HCT116 (cell line): ENCODE measurements at regions of chr14 and their contacts with region 1.

Region 1: GRCh38 chr14:20707622-20708021 is 19.1 kb downstream of the ANG start:
- DNase-seq: no peak
- ATAC-seq: no peak
- H3K4me3 ChIP-seq: no peak overlapping the region
- H3K27ac ChIP-seq: no peak overlapping the region
- H3K4me1 ChIP-seq: no peaks in the 10 kb centered on the region
- H3K27me3 ChIP-seq: no peaks in the 10 kb centered on the region
- CTCF ChIP-seq: no peak
- POLR2A ChIP-seq: no peak
- RAD21 ChIP-seq: no peak

Region 2: GRCh38 chr14:20934148-20934762 is 226.6 kb after region 1 on chr14:
- CTCF ChIA-PET with region 1: no interaction called
- POLR2A ChIA-PET with region 1: no interaction called
- RAD21 ChIA-PET with region 1: no interaction called
- intact Hi-C with region 1: loop called (anchors 10 kb)
- DNase-seq: peak; percentile 62
- ATAC-seq: peak; percentile 99
- H3K4me3 ChIP-seq: no peak overlapping the region
- H3K27ac ChIP-seq: no peak overlapping the region
- H3K4me1 ChIP-seq: no peaks in the 10 kb centered on the region
- H3K27me3 ChIP-seq: peaks cover 22% of the 10 kb centered on the region; the same call in 1 of the 2 replicates
- CTCF ChIP-seq: peak; percentile 47 to 99 (median 99); a peak in 4 of 6 replicates
- POLR2A ChIP-seq: no peak
- RAD21 ChIP-seq: peak; percentile 37